ENCODE measurements at regions of chr9 and their contacts with region 1.

Region 1: GRCh38 chr9:4762108-4762885 is 21.3 kb upstream of the AK3 start:
- DNase-seq: peak; percentile 71 to 89 (median 78)
- ATAC-seq: peak; percentile 87
- H3K4me3 ChIP-seq: no peak overlapping the region
- H3K4me3 Mint-ChIP-seq: peak overlapping the region; percentile 3
- H3K27ac ChIP-seq: no peak overlapping the region
- H3K27ac Mint-ChIP-seq: no peak overlapping the region
- H3K4me1 ChIP-seq: peaks cover 20% of the 10 kb centered on the region
- H3K4me1 Mint-ChIP-seq: peaks cover 11% of the 10 kb centered on the region
- H3K27me3 ChIP-seq: no peaks in the 10 kb centered on the region
- H3K27me3 Mint-ChIP-seq: no peaks in the 10 kb centered on the region
- CTCF ChIP-seq: peak; percentile 84

Region 2: DNA sequence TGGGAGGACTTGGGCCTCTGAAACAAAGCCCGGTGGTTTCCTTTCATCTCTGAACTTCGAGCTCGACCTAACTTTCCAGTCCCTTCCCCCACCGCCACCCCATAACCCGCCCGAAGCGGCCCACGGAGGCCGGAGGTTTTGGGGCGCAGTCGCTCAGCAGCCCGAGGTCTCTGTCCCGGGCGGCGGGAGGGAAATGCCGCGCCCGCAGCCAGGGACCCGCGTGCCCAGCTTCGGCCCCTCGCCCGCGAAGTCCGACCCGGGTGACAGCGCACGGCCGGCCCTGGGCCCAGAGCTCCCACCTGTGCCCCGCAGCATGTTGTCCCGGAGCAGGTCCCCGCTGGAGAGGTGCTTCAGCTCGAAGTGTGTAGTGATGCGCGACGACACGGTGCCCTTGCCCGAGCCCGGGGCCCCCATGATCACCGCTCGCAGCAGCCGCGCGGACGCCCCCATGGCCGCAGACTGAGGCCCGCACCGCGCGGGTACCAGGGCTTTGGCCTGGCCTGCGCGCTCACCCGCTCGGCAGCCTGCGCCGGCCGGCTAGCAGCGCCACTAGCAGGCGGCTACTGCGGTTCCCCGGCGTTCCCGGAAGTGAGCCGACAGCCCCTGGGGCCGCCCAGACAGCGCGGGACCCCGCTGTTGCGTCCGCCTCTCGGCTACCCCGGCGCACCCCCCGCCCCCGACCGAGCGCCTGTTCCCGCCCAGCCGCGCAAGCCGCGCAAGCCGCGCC is 21.5 kb before region 1 on chr9 and contains the start of gene AK3:
- CTCF ChIA-PET with region 1: interaction called, 14 read pairs
- POLR2A ChIA-PET with region 1: interaction called, 4 read pairs
- intact Hi-C with region 1: no loop called
- DNase-seq: peak; percentile 61 to 94 (median 80)
- ATAC-seq: peak; percentile 92
- H3K4me3 ChIP-seq: peak within 1 kb of the TSS; percentile 86
- H3K4me3 Mint-ChIP-seq: peak within 1 kb of the TSS; percentile 97
- H3K27ac ChIP-seq: peak within 1 kb of the TSS; percentile 57 to 66
- H3K27ac Mint-ChIP-seq: peak within 1 kb of the TSS; percentile 83
- H3K4me1 ChIP-seq: peaks cover 28% of the 10 kb centered on the region
- H3K4me1 Mint-ChIP-seq: peaks cover 36% of the 10 kb centered on the region
- H3K27me3 ChIP-seq: no peaks in the 10 kb centered on the region
- H3K27me3 Mint-ChIP-seq: no peaks in the 10 kb centered on the region
- CTCF ChIP-seq: no peak
- total RNA-seq, gene AK3: 19.9 to 20.9 TPM

Region 3: DNA sequence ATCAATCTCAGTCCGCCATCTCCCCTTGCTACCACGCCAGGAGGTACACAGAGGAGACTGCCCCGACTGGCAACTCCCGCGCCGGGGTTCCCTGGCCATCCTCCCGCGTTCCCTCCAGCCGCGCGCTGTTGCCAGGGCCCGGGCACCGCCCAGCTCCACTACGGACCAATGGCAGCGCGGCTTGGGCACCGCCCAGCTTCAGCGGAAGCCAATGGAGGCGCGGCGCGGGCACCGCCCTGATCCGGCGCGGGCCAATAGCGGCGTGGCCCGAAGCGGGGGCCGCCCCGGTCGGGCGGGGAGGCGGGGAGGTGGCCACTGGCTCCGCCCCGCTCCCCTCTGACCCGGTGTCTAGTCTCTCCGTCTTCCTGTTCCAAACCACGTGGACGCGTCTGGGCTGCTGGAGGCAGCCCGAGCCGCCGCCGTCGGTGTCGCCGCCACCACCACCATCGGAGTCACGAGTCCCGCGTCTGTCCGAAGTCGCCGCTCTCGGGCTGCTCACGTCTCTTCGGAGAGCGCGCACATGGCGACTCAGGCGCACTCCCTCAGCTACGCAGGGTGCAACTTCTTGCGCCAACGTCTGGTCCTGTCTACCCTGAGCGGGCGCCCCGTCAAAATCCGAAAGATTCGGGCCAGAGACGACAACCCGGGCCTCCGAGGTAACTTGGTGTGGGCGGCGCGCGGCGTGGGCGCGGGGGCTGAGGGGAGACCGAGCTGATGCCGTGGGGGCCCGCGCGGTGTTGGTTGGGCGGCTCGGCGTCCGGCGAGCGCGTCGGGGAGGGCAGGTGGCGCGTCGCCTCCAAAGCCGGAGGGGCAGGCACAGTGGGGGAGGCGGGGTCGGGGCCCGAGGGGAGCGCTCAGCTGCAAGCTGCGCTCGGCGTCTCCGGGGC is 30.5 kb after region 1 on chr9 and contains the start of gene RCL1:
- CTCF ChIA-PET with region 1: interaction called, 12 read pairs
- POLR2A ChIA-PET with region 1: interaction called, 6 read pairs
- intact Hi-C with region 1: loop called (anchors 2 kb)
- DNase-seq: peak; percentile 89 to 98 (median 94)
- ATAC-seq: peak; percentile 89
- H3K4me3 ChIP-seq: peak within 1 kb of the TSS; percentile 87
- H3K4me3 Mint-ChIP-seq: peak within 1 kb of the TSS; percentile 97
- H3K27ac ChIP-seq: peak within 1 kb of the TSS; percentile 83 to 87
- H3K27ac Mint-ChIP-seq: peak within 1 kb of the TSS; percentile 92
- H3K4me1 ChIP-seq: peaks cover 25% of the 10 kb centered on the region
- H3K4me1 Mint-ChIP-seq: peaks cover 45% of the 10 kb centered on the region
- H3K27me3 ChIP-seq: no peaks in the 10 kb centered on the region
- H3K27me3 Mint-ChIP-seq: no peaks in the 10 kb centered on the region
- CTCF ChIP-seq: no peak
- total RNA-seq, gene RCL1: 33.8 to 35.5 TPM

Region 4: DNA sequence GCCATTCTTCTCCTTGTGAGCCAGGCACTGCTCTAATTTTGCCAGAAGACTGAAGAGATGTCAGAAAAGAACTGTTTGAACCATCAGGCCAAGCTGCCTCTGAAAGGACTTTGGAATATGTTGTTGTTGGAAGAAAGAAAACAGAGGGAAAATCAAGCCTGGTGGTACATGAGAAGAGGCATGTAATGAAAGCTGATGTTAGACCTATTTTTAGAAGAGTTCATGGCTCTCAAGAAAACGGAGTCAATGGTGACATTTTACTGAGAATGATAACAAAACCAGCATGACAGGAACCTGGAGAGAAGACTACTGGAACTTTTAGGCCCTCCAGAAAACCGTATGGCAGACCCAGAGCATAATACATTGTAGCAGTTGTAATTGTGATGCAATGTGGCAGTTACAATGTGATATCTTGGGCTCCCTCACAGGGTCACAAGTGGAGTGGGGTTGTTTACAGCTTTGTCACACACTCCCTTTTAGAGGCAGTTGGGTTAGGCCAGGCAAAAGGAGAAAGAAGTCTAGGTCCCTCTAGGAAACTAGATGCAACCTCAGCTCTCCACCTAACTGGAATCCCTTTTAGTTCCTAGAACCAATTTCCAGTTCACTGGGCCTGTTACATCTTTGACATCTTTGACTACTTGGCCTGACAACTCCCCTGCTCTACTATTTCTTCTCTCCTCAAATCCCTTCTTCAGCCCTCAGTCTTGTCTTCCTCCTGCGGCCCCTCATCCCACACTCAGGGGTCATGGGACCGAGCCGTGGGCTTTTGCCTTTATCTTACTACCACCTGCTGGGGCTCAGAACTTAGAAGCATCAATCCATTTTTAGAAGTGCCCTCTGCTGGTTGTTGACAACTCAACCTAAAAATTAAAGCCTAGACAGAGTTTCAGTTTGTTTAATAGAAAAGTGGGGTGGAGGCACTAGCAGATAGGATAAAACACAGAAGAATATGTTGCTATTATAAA is 161.6 kb after region 1 on chr9:
- CTCF ChIA-PET with region 1: interaction called, 6 read pairs
- POLR2A ChIA-PET with region 1: no interaction called
- intact Hi-C with region 1: loop called (anchors 1 kb)
- DNase-seq: peak in 4 of 14 experiments; percentile 24 to 57 (median 56)
- ATAC-seq: peak; percentile 34
- H3K4me3 ChIP-seq: no peak overlapping the region
- H3K4me3 Mint-ChIP-seq: no peak overlapping the region
- H3K27ac ChIP-seq: no peak overlapping the region
- H3K27ac Mint-ChIP-seq: no peak overlapping the region
- H3K4me1 ChIP-seq: no peaks in the 10 kb centered on the region
- H3K4me1 Mint-ChIP-seq: peaks cover 5% of the 10 kb centered on the region
- H3K27me3 ChIP-seq: no peaks in the 10 kb centered on the region
- H3K27me3 Mint-ChIP-seq: no peaks in the 10 kb centered on the region
- CTCF ChIP-seq: peak; percentile 62

Region 5: DNA sequence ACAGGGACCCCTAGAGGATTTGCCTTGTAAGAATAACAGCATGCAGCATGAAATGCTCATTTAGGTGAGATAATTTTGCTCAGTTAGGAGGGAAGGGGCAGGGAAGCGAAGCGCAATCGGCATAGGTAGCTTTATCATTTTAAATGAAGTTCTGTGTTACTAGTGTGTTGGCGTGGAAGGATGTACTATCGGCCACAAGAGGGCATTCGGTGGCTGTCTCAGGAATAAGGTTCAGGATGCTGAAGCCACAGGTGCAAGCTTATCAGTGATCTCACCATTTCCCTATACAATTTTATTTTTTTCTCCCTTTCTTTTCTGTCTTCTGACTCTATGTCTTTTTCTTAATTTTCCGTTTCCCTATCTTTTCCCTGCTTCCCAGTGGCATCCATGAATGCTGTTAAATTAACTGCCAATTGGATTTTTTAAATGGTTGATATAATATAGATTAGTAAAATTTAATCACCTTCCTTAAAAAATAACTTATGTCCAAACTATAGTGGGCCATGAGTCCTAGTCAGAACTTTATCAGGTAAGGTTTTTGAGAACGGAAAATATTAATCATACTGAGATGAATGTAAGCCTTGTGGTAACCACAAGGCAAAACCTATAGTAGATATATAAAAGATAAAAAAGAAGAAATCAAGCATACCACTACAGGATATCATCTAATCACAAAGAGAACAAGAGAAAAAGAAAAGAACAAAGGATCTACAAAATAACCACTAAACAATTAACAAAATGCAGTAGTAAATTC is 424.3 kb after region 1 on chr9:
- CTCF ChIA-PET with region 1: no interaction called
- POLR2A ChIA-PET with region 1: no interaction called
- intact Hi-C with region 1: loop called in 1 of 2 experiments (anchors 5 kb)
- DNase-seq: peak; percentile 39 to 86 (median 54)
- ATAC-seq: peak; percentile 96
- H3K4me3 ChIP-seq: no peak overlapping the region
- H3K4me3 Mint-ChIP-seq: no peak overlapping the region
- H3K27ac ChIP-seq: no peak overlapping the region
- H3K27ac Mint-ChIP-seq: no peak overlapping the region
- H3K4me1 ChIP-seq: peaks cover 5% of the 10 kb centered on the region
- H3K4me1 Mint-ChIP-seq: peaks cover 12% of the 10 kb centered on the region
- H3K27me3 ChIP-seq: no peaks in the 10 kb centered on the region
- H3K27me3 Mint-ChIP-seq: no peaks in the 10 kb centered on the region
- CTCF ChIP-seq: peak; percentile 83

Region 6: GRCh38 chr9:5425006-5425628 is 662.8 kb after region 1 on chr9:
- CTCF ChIA-PET with region 1: no interaction called
- POLR2A ChIA-PET with region 1: no interaction called
- intact Hi-C with region 1: loop called (anchors 1 to 5 kb)
- DNase-seq: peak in 3 of 14 experiments; percentile 61 to 67 (median 66)
- ATAC-seq: peak; percentile 74
- H3K4me3 ChIP-seq: no peak overlapping the region
- H3K4me3 Mint-ChIP-seq: no peak overlapping the region
- H3K27ac ChIP-seq: no peak overlapping the region
- H3K27ac Mint-ChIP-seq: no peak overlapping the region
- H3K4me1 ChIP-seq: no peaks in the 10 kb centered on the region
- H3K4me1 Mint-ChIP-seq: peaks cover 5% of the 10 kb centered on the region
- H3K27me3 ChIP-seq: no peaks in the 10 kb centered on the region
- H3K27me3 Mint-ChIP-seq: no peaks in the 10 kb centered on the region
- CTCF ChIP-seq: peak; percentile 79

Measured in CD4-positive, alpha-beta T cell (primary cell).